ENCODE measurements at regions of chr7 and their contacts with region 1.

Region 1: GRCh38 chr7:92245487-92246362 is at the starts of genes ANKIB1 and KRIT1:
- DNase-seq: peak; percentile 65 to 93 (median 88)
- ATAC-seq: peak; percentile 74
- H3K4me3 ChIP-seq: peak within 1 kb of the TSS; percentile 86 to 90
- H3K4me3 Mint-ChIP-seq: peak within 1 kb of the TSS; percentile 98
- H3K27ac ChIP-seq: peak within 1 kb of the TSS; percentile 93 to 98
- H3K27ac Mint-ChIP-seq: peak within 1 kb of the TSS; percentile 99
- H3K4me1 ChIP-seq: peaks cover 29% of the 10 kb centered on the region
- H3K4me1 Mint-ChIP-seq: peaks cover 52% of the 10 kb centered on the region
- H3K27me3 ChIP-seq: no peaks in the 10 kb centered on the region
- H3K27me3 Mint-ChIP-seq: no peaks in the 10 kb centered on the region
- CTCF ChIP-seq: no peak
- total RNA-seq, gene ANKIB1: 51.1 to 59.6 TPM
- total RNA-seq, gene KRIT1: 25.0 to 27.0 TPM

Region 2: DNA sequence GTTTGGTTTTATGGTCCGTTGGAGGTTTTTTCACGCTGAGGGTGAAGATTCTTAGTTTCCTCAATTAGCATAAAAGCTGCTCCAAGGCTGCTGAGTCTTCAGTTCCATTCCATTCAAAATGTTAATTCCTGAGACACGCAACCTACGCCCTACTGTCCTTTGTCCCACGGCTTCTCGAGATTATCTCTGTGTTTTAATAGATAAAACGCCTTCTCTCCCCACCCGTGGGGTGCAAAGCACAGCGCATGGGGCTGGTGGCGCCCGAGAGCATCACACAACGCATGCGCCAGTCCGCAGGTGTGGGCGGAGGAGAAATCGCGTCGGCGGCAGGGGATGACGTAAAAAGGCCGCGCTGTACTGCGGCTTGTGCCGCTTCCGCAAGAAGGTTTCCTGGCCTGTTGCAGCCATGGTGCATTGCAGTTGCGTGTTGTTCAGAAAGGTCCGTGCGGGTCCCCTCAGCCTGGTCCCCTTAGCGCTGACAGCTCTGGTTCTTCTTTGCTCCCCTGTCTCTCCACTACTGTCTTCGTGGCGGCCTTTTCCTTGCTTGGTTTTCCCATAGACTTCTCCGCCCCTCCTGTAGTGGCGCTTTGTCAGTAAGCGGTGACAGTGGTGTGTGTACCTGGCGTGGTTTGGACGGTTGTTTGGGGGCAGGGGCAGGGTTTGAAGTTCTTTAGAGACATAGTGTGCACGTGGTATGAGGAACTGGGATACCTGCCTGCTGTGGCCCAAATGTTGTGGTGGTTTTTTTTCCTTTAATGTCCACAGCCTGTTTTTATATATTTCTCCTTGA is 1899.2 kb before region 1 on chr7 and contains the start of gene GTPBP10:
- CTCF ChIA-PET with region 1: no interaction called
- POLR2A ChIA-PET with region 1: no interaction called
- intact Hi-C with region 1: loop called in 1 of 2 experiments (anchors 10 kb)
- DNase-seq: peak; percentile 91 to 98 (median 95)
- ATAC-seq: peak; percentile 93
- H3K4me3 ChIP-seq: peak within 1 kb of the TSS; percentile 77 to 81
- H3K4me3 Mint-ChIP-seq: peak within 1 kb of the TSS; percentile 98
- H3K27ac ChIP-seq: peak within 1 kb of the TSS; percentile 92 to 97
- H3K27ac Mint-ChIP-seq: peak within 1 kb of the TSS; percentile 100
- H3K4me1 ChIP-seq: peaks cover 22% of the 10 kb centered on the region
- H3K4me1 Mint-ChIP-seq: peaks cover 56% of the 10 kb centered on the region
- H3K27me3 ChIP-seq: no peaks in the 10 kb centered on the region
- H3K27me3 Mint-ChIP-seq: no peaks in the 10 kb centered on the region
- CTCF ChIP-seq: peak; percentile 71
- total RNA-seq, gene GTPBP10: 15.3 to 18.3 TPM

Region 3: DNA sequence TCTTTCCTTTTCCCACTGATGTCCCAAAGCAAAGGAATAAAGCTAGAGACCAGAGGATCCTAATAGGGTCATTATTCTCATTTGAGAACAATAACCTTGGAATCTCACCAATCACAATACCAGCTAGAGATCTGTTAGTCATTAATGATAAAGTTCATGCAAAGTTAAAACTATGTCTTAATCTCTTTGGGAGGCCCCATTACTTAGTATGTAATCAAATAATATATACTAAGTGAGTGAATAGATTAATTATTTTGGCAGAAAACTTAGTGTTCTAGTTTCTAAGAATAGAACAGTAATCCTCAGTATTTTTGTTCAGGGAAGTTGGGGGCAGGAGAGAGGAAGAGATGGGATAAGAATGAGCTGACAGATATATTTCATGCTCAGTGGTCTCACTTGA is 592.4 kb before region 1 on chr7:
- CTCF ChIA-PET with region 1: no interaction called
- POLR2A ChIA-PET with region 1: no interaction called
- intact Hi-C with region 1: no loop called
- DNase-seq: no peak
- ATAC-seq: no peak
- H3K4me3 ChIP-seq: no peak overlapping the region
- H3K4me3 Mint-ChIP-seq: no peak overlapping the region
- H3K27ac ChIP-seq: no peak overlapping the region
- H3K27ac Mint-ChIP-seq: no peak overlapping the region
- H3K4me1 ChIP-seq: no peaks in the 10 kb centered on the region
- H3K4me1 Mint-ChIP-seq: no peaks in the 10 kb centered on the region
- H3K27me3 ChIP-seq: no peaks in the 10 kb centered on the region
- H3K27me3 Mint-ChIP-seq: no peaks in the 10 kb centered on the region
- CTCF ChIP-seq: no peak

Region 4: DNA sequence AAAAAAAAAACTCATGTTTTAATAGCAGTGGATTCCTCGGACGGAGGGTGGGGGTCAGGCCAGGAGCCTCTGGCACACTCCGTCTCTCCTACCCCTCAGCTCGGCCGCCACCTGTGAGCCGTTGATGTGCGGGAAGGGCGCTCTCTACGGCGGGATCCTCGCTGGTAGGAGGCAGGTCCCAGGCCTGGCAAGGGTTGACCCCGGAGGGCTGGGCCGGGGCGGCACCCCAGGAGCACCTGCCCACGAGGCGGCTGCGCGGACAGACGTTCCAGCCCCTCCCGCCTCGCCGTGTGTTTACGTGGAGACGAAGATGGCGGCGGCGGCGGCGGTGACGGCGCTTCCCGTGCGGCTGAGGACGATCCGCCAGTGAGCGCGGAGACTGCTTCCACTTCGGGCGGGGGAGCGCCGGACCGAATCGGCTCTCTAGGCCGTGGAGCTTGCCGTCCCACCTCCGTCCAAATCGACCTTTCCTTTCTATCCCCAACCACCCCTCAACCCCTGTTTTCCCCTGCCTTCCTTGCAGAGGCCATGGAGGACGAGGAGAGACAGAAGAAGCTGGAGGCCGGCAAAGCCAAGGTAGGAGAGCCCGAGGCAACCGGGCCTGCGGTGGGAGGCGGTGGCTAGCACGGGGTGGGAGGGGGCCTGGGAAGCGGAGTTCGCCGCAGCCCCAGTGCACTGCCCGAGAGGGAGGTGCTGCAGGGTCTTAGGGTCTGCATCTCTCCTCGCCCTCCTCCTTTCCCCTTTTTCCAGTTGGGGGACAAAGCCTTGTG is 305.0 kb before region 1 on chr7 and contains the start of gene AKAP9:
- CTCF ChIA-PET with region 1: no interaction called
- POLR2A ChIA-PET with region 1: interaction called, 6 read pairs
- intact Hi-C with region 1: loop called (anchors 2 to 5 kb)
- DNase-seq: peak; percentile 71 to 93 (median 89)
- ATAC-seq: peak; percentile 84
- H3K4me3 ChIP-seq: peak within 1 kb of the TSS; percentile 78 to 92
- H3K4me3 Mint-ChIP-seq: peak within 1 kb of the TSS; percentile 93
- H3K27ac ChIP-seq: peak within 1 kb of the TSS; percentile 91 to 93
- H3K27ac Mint-ChIP-seq: peak within 1 kb of the TSS; percentile 96
- H3K4me1 ChIP-seq: peaks cover 21% of the 10 kb centered on the region
- H3K4me1 Mint-ChIP-seq: peaks cover 45% of the 10 kb centered on the region
- H3K27me3 ChIP-seq: no peaks in the 10 kb centered on the region
- H3K27me3 Mint-ChIP-seq: no peaks in the 10 kb centered on the region
- CTCF ChIP-seq: no peak
- total RNA-seq, gene AKAP9: 61.2 to 61.3 TPM

Region 5: DNA sequence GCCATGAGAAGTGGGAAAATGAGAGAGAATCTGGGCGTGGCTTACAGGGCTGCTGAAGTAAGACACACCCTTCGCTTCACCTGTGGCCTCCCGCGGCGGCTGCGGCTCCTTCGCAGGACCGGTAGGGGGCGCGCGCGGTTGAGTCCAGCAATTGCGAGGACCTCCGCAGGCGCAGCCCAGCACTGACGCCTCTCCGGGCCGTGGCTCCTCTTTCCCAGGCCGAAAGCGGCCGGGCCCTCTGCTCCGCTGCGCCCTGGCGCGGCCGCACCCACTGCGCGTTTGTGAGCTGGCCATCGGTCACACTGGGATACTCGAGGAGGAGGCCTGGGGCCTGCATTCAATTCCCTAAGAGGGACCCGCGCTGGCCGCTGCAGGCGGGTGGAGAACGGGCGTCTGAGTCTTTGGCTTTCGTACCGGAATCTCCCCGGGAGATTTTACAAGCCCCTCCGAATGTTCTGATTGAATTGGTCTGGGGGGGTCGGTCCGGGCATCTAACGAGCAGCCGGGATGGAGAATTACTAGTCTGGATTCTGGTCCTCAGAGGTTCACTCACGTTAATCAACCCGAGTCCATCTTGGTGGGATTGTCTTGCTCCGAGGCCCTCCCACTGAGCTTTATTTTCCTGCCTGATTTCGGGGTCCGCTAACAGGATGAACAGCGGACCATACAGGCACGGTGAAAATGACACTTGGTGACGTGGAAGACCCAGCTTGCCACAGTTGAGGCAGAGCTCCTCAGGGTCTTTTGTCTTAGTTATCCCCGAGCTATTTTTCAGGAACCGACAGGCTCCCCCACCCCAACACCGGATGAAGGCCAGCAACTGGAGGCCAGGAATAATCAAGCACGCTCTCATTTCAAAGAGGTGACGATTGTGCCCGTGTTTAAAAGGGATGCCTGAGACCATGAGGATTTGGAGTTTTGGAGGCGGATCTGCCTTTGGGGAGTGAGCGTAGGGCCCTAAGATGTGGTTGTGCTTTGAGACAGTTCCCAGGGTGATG is 66.5 kb before region 1 on chr7 and contains the start of gene LRRD1:
- CTCF ChIA-PET with region 1: no interaction called
- POLR2A ChIA-PET with region 1: interaction called, 4 read pairs
- intact Hi-C with region 1: loop called (anchors 2 kb)
- DNase-seq: peak; percentile 81 to 95 (median 87)
- ATAC-seq: peak; percentile 100
- H3K4me3 ChIP-seq: peak within 1 kb of the TSS; percentile 58 to 64
- H3K4me3 Mint-ChIP-seq: peak within 1 kb of the TSS; percentile 82
- H3K27ac ChIP-seq: peak within 1 kb of the TSS in 1 of 2 experiments; percentile 24
- H3K27ac Mint-ChIP-seq: no peak within 1 kb of the TSS
- H3K4me1 ChIP-seq: peaks cover 3% of the 10 kb centered on the region
- H3K4me1 Mint-ChIP-seq: peaks cover 5% of the 10 kb centered on the region
- H3K27me3 ChIP-seq: no peaks in the 10 kb centered on the region
- H3K27me3 Mint-ChIP-seq: peaks cover 5% of the 10 kb centered on the region
- CTCF ChIP-seq: peak; percentile 97
- total RNA-seq, gene LRRD1: not detected

Region 6: DNA sequence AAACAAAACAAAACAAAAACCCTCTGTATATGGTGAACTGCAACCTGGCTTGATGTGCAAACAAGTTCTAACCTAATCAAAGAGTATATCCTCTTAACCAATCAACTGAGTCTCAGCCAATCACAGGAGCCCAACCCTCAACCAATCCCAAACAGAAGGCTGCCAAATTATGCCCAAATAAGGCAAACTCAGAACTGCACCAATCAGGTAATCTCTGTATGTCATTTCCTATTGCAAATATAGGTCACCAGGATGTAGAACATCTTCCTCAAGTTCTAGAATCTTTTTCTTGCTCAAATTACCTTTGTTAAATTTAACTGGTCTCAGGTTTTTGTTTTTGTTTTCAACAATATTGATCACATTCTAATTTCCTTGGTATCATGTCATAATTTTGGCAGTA is 339.3 kb after region 1 on chr7:
- CTCF ChIA-PET with region 1: no interaction called
- POLR2A ChIA-PET with region 1: no interaction called
- intact Hi-C with region 1: loop called (anchors 2 to 5 kb)
- DNase-seq: peak in 2 of 9 experiments; percentile 28 to 53
- ATAC-seq: peak; percentile 21
- H3K4me3 ChIP-seq: no peak overlapping the region
- H3K4me3 Mint-ChIP-seq: peak overlapping the region; percentile 37
- H3K27ac ChIP-seq: peak overlapping the region in 1 of 2 experiments; percentile 13
- H3K27ac Mint-ChIP-seq: peak overlapping the region; percentile 89
- H3K4me1 ChIP-seq: peaks cover 40% of the 10 kb centered on the region
- H3K4me1 Mint-ChIP-seq: peaks cover 80% of the 10 kb centered on the region
- H3K27me3 ChIP-seq: no peaks in the 10 kb centered on the region
- H3K27me3 Mint-ChIP-seq: no peaks in the 10 kb centered on the region
- CTCF ChIP-seq: no peak

Region 7: GRCh38 chr7:92590711-92591310 is 345.1 kb after region 1 on chr7:
- CTCF ChIA-PET with region 1: no interaction called
- POLR2A ChIA-PET with region 1: no interaction called
- intact Hi-C with region 1: loop called (anchors 2 to 5 kb)
- DNase-seq: peak in 1 of 9 experiments; percentile 11
- ATAC-seq: no peak
- H3K4me3 ChIP-seq: peak overlapping the region; percentile 71 to 74
- H3K4me3 Mint-ChIP-seq: peak overlapping the region; percentile 96
- H3K27ac ChIP-seq: no peak overlapping the region
- H3K27ac Mint-ChIP-seq: no peak overlapping the region
- H3K4me1 ChIP-seq: peaks cover 32% of the 10 kb centered on the region
- H3K4me1 Mint-ChIP-seq: peaks cover 46% of the 10 kb centered on the region
- H3K27me3 ChIP-seq: no peaks in the 10 kb centered on the region
- H3K27me3 Mint-ChIP-seq: no peaks in the 10 kb centered on the region
- CTCF ChIP-seq: no peak

Region 8: GRCh38 chr7:93117852-93118530 is 872.3 kb after region 1 on chr7 and contains the start of gene SAMD9:
- CTCF ChIA-PET with region 1: no interaction called
- POLR2A ChIA-PET with region 1: no interaction called
- intact Hi-C with region 1: loop called in 1 of 2 experiments (anchors 5 kb)
- DNase-seq: peak; percentile 18 to 91 (median 60)
- ATAC-seq: peak; percentile 99
- H3K4me3 ChIP-seq: peak within 1 kb of the TSS; percentile 61 to 64
- H3K4me3 Mint-ChIP-seq: peak within 1 kb of the TSS; percentile 80
- H3K27ac ChIP-seq: peak within 1 kb of the TSS; percentile 58 to 81
- H3K27ac Mint-ChIP-seq: peak within 1 kb of the TSS; percentile 84
- H3K4me1 ChIP-seq: peaks cover 28% of the 10 kb centered on the region
- H3K4me1 Mint-ChIP-seq: peaks cover 47% of the 10 kb centered on the region
- H3K27me3 ChIP-seq: no peaks in the 10 kb centered on the region
- H3K27me3 Mint-ChIP-seq: no peaks in the 10 kb centered on the region
- CTCF ChIP-seq: no peak
- total RNA-seq, gene SAMD9: 23.5 to 23.8 TPM

Measured in CD8-positive, alpha-beta T cell (primary cell).